Activated B cell treated with CpG ODN at 0.5 μM for 24 hours (primary cell): ENCODE measurements at regions of chr4 and their contacts with region 1.

Region 1: DNA sequence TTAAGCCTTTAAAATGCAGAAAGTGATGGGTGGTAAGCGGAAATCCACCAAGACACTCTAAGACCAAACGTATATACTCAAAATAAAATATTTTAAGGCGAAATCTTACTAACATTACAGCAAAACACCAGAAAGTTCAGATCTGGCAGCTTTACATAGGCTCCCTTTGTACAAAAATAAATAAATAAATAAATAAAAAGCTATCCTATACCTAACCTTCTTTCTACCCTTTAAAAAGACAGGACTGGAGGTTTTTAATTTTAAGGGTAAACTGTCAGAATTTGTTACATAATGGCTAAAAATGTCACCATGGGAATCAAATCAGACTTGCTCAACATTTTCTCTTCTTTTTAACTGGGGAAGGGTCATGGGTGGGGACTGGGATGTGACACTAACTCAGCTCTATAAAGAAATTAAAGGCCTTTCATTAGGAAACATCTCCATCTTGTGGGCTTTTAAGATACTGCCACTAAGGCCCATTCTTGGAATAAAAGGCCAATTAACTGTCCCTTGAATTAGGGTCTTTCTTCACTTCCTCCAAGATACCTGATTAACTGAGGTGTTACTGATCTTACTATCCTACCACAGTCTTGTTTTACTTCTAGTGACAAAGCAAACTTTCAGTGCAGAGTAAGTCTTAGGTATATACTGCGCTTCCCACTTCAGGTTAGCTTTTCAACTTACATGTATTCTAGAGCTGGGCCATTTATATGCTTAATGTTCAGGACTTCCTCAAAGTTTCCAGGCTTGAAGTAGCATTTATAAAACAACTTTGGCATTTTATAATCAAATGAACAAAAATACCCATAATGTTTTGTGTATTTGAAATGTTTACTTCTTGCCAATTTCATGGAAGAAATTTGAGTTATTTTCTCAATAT is 13.3 kb downstream of the HNRNPD start:
- DNase-seq: no peak
- ATAC-seq: peak; percentile 75
- H3K4me3 Mint-ChIP-seq: no peak overlapping the region
- H3K27ac Mint-ChIP-seq: peak overlapping the region; percentile 6
- H3K4me1 Mint-ChIP-seq: peaks cover 69% of the 10 kb centered on the region
- H3K27me3 Mint-ChIP-seq: no peaks in the 10 kb centered on the region
- CTCF ChIP-seq: peak; percentile 38

Region 2: DNA sequence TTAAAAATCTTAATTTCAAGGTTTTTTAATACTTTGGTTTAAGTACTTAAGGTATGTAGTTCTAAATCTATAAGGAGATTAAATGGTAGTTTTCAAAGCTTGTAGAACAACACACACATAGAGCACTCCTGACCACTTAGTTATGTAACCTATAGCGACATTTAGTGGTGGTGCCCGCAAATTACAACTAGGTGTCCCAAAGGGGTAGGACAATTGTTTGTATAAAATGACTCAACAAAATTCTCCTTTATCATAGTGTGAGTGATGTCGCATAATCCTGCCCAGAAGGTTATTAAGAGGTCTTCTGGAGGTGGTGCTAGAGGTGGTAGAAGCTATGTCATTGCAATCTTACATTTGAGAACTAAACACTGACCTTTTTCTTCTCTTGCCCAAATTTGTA is 515.8 kb before region 1 on chr4:
- CTCF ChIA-PET with region 1: interaction called, 3 read pairs
- POLR2A ChIA-PET with region 1: no interaction called
- intact Hi-C with region 1: loop called (anchors 2 kb)
- DNase-seq: peak; percentile 33
- ATAC-seq: peak; percentile 98
- H3K4me3 Mint-ChIP-seq: no peak overlapping the region
- H3K27ac Mint-ChIP-seq: no peak overlapping the region
- H3K4me1 Mint-ChIP-seq: peaks cover 4% of the 10 kb centered on the region
- H3K27me3 Mint-ChIP-seq: no peaks in the 10 kb centered on the region
- CTCF ChIP-seq: peak; percentile 69

Region 3: GRCh38 chr4:81963763-81964020 is 396.8 kb before region 1 on chr4:
- CTCF ChIA-PET with region 1: no interaction called
- POLR2A ChIA-PET with region 1: no interaction called
- intact Hi-C with region 1: no loop called
- DNase-seq: no peak
- ATAC-seq: no peak
- H3K4me3 Mint-ChIP-seq: no peak overlapping the region
- H3K27ac Mint-ChIP-seq: no peak overlapping the region
- H3K4me1 Mint-ChIP-seq: peaks cover 9% of the 10 kb centered on the region
- H3K27me3 Mint-ChIP-seq: peaks cover 11% of the 10 kb centered on the region
- CTCF ChIP-seq: no peak

Region 4: GRCh38 chr4:82123934-82124333 is 236.6 kb before region 1 on chr4:
- CTCF ChIA-PET with region 1: no interaction called
- POLR2A ChIA-PET with region 1: no interaction called
- intact Hi-C with region 1: loop called (anchors 5 kb)
- DNase-seq: no peak
- ATAC-seq: no peak
- H3K4me3 Mint-ChIP-seq: no peak overlapping the region
- H3K27ac Mint-ChIP-seq: no peak overlapping the region
- H3K4me1 Mint-ChIP-seq: no peaks in the 10 kb centered on the region
- H3K27me3 Mint-ChIP-seq: peaks cover 5% of the 10 kb centered on the region
- CTCF ChIP-seq: no peak

Region 5: GRCh38 chr4:82223715-82224114 is 136.8 kb before region 1 on chr4:
- CTCF ChIA-PET with region 1: no interaction called
- POLR2A ChIA-PET with region 1: no interaction called
- intact Hi-C with region 1: loop called (anchors 5 kb)
- DNase-seq: no peak
- ATAC-seq: peak; percentile 99
- H3K4me3 Mint-ChIP-seq: peak overlapping the region; percentile 49
- H3K27ac Mint-ChIP-seq: peak overlapping the region; percentile 31
- H3K4me1 Mint-ChIP-seq: peaks cover 19% of the 10 kb centered on the region
- H3K27me3 Mint-ChIP-seq: peaks cover 2% of the 10 kb centered on the region
- CTCF ChIP-seq: no peak

Region 6: DNA sequence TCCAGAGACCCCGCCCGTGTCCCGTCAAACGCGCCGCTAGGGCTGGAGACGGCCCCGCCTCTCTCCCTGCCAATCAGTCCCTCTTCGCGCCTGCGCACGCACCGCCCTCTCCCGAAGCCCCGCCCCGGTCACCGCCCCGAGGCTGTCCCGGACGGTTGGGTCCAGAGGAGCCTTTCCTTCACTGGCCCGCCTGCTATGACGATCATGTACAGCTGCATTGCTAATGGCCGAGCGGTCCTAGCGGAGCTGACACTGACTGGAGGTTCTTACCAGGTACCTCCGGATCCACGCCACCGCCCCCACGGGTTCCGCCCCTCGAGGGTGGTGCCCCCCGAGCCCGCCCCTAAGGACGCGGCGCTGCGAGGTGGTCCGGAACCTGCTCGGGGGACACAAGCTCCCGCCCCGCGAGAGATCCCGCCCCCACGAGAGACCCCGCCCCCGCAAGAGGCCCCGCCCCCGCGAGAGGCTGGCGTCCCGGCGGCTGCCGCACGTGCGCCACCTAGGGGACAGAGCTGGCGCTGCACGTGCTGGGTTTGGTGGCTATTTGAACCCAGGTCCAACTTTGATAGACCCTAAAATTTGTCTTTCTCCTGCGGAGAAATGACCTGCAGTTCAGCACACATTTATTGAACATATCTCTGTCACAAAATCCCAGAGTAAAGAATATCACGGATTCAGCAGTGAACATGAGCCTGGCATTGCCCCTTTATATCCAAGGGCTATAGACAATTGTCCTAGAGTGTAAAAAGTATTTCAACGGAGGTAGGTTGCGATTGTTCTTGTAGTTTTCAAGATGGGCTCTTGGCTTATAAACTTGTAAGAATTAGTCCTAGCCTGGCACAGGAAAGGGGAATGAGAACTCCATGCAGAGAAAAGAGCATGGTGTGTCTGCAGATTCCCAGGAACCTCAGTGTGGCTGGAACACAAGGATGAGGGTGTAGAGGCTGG is 75.4 kb before region 1 on chr4:
- CTCF ChIA-PET with region 1: interaction called, 24 read pairs
- POLR2A ChIA-PET with region 1: interaction called, 4 read pairs
- intact Hi-C with region 1: loop called (anchors 2 kb)
- DNase-seq: peak; percentile 100
- ATAC-seq: peak; percentile 92
- H3K4me3 Mint-ChIP-seq: peak overlapping the region; percentile 83
- H3K27ac Mint-ChIP-seq: peak overlapping the region; percentile 77
- H3K4me1 Mint-ChIP-seq: peaks cover 21% of the 10 kb centered on the region
- H3K27me3 Mint-ChIP-seq: no peaks in the 10 kb centered on the region
- CTCF ChIP-seq: peak; percentile 97

Region 7: DNA sequence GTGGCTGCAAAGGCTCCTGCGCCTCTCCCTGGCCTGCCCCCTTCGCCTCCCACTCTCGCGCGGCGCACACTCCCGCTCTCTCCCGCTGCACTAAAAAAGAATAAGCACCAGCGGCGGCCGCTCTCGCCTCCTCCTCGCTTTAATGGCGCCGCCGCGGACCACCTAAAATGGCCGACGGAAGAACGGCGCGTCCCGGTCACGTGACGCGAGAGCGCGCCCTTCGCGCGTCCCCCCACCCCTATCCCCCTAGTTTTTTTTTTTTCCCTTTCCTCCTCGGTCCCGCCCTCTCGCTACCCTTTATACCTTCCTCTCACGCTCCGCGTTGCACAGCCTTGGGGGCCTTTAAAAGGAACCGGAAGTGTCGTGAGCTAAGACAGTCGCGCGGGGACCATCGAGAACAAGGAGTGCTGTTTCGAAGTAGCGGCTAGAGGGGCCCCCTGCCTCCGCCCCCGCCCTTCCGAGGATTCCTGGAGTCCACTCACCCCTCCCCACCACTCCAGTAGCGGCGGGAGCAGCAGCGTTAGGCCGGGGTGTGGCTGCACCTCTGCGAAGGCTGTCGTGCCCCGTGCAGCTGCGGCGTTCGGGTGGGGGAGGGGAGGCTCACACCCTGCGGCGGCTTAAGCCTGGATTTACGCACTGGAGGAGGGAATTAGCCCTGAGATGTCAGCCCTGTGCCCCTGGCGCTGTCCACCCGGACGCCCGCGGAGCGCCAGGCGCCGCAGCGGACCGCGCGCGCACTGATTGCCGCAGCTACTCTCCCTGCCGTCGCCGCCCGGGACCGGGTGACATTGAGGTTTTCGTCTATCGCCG is 13.5 kb after region 1 on chr4 and contains the start of gene HNRNPD:
- CTCF ChIA-PET with region 1: interaction called, 12 read pairs
- POLR2A ChIA-PET with region 1: interaction called, 9 read pairs
- intact Hi-C with region 1: loop called (anchors 1 kb)
- DNase-seq: peak; percentile 83
- ATAC-seq: peak; percentile 88
- H3K4me3 Mint-ChIP-seq: peak within 1 kb of the TSS; percentile 98
- H3K27ac Mint-ChIP-seq: peak within 1 kb of the TSS; percentile 100
- H3K4me1 Mint-ChIP-seq: peaks cover 55% of the 10 kb centered on the region
- H3K27me3 Mint-ChIP-seq: no peaks in the 10 kb centered on the region
- CTCF ChIP-seq: no peak
- total RNA-seq, gene HNRNPD: 300 and 350 TPM in 2 replicates

Region 8: DNA sequence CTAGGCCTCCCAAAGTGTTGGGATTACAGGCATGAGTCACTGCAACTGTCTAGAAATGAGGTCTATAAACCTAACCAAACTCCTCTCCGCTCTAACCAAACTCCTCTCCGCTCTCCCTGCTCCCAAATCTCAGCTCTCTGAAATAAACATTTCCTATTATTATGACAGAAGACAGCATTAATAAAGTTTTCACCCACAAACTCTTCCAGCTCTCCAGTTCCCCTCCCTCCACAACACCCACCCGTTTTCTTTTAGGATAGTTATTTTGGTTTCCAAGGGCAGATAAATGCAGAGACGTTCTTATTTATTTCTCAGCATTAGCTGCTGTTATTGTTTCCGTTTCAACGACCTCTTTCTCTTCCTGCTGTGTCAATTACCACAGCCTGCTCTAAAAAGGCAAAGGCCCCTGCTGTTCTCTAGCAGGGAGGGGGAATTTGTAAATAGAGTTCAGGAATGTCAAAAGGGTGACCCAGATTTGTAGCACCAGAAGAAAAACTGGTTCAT is 451.4 kb after region 1 on chr4:
- CTCF ChIA-PET with region 1: no interaction called
- POLR2A ChIA-PET with region 1: no interaction called
- intact Hi-C with region 1: no loop called
- DNase-seq: no peak
- ATAC-seq: no peak
- H3K4me3 Mint-ChIP-seq: no peak overlapping the region
- H3K27ac Mint-ChIP-seq: no peak overlapping the region
- H3K4me1 Mint-ChIP-seq: no peaks in the 10 kb centered on the region
- H3K27me3 Mint-ChIP-seq: peaks cover 3% of the 10 kb centered on the region
- CTCF ChIP-seq: no peak